ENCODE measurements at regions of chr20 and their contacts with region 1.

Region 1: DNA sequence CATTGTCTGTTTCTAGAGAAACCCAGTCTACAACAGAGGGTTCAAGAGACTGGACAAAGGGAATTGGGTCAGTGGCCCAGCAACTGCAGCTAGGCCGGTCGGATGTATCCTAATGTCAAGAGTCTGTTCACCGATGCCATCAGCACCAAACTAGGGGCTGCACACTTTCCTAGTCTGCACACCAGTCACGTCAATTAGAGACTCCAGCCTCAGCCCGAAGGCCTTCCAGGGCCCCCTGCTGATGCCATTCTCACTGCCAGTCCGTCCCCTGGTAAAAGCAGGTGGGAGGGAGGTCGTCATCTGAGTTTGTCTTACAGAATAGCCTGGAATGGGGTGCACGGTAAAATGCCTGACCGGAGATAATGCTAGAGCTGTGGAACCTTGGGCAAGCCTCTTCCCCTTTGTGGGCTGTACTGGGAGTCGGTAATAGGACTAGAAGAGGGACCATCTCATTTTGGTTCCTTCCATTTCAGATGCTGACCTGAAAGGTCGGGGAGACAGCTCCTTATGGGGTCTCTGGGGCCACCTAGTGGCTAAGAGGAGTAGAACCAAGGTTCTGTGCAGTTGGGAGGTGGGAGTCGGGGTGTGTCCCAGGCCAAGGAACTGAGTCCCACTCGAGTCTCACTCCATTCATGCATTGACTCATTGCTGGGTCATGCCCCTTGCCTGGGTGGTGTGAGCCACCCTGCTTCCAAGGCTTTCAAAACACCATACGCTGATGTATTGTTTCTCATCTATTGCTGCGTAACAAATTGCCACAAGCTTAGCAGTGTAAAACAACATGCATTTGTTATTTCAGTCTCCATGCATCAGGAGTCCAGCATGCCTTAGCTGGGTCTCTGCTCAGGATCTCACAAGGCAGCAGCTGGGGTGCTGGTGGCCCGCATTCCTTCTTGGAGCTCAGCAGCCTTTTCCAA is 5.1 kb downstream of the SOX12 start:
- DNase-seq: peak in 7 of 9 experiments; percentile 38 to 82 (median 72)
- ATAC-seq: peak; percentile 37
- H3K4me3 ChIP-seq: no peak overlapping the region
- H3K4me3 Mint-ChIP-seq: no peak overlapping the region
- H3K27ac ChIP-seq: no peak overlapping the region
- H3K27ac Mint-ChIP-seq: no peak overlapping the region
- H3K4me1 ChIP-seq: peaks cover 20% of the 10 kb centered on the region
- H3K4me1 Mint-ChIP-seq: peaks cover 32% of the 10 kb centered on the region
- H3K27me3 ChIP-seq: no peaks in the 10 kb centered on the region
- H3K27me3 Mint-ChIP-seq: no peaks in the 10 kb centered on the region
- CTCF ChIP-seq: peak; percentile 86

Region 2: DNA sequence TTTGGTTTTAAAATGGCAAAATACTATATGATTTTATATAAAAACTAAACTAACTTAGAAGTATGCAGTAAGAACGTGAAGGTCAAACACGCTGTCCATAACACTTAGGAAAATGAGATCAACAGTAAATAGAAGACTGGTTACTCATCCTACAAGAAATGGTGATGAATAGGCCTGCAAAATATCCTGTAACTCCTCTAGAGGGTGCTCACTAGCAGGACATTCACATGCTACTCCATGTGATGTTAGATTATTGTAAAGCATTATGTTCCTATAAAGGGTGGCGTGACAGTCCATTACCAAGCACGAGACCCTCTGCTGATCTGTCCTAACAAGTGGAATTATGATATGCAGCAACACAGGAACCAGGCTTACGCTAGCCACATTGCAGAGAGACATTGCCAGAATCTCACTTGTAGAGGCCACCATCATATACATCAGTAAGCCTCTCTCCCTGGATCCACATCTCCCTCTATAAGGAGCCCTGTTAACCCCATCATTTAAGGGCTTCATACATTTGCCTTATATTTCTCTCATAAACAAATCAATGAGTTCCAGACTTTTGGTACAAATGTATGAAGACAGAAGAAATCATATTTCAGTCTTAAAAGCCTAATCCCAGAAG is 121.4 kb before region 1 on chr20:
- CTCF ChIA-PET with region 1: interaction called, 29 read pairs
- POLR2A ChIA-PET with region 1: no interaction called
- intact Hi-C with region 1: loop called (anchors 1 kb)
- DNase-seq: peak in 3 of 9 experiments; percentile 7 to 68 (median 50)
- ATAC-seq: peak; percentile 80
- H3K4me3 ChIP-seq: no peak overlapping the region
- H3K4me3 Mint-ChIP-seq: no peak overlapping the region
- H3K27ac ChIP-seq: no peak overlapping the region
- H3K27ac Mint-ChIP-seq: no peak overlapping the region
- H3K4me1 ChIP-seq: no peaks in the 10 kb centered on the region
- H3K4me1 Mint-ChIP-seq: no peaks in the 10 kb centered on the region
- H3K27me3 ChIP-seq: no peaks in the 10 kb centered on the region
- H3K27me3 Mint-ChIP-seq: peaks cover 2% of the 10 kb centered on the region
- CTCF ChIP-seq: peak; percentile 55

Region 3: DNA sequence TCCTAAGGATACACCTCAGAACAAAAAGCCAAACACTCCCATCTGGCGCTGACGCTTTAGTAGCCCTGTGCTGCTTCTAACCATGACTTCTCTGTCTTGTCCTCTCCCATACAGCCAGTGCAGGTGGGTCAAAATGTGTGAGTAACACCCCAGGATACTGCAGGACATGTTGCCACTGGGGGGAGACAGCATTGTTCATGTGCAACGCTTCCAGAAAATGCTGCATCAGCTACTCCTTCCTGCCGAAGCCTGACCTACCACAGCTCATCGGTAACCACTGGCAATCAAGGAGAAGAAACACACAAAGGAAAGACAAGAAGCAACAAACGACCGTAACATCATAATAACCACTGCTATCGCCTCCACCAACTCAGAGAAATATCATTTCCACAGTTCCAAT is 71.5 kb before region 1 on chr20:
- CTCF ChIA-PET with region 1: interaction called, 11 read pairs
- POLR2A ChIA-PET with region 1: no interaction called
- intact Hi-C with region 1: loop called in 1 of 2 experiments (anchors 1 kb)
- DNase-seq: peak in 3 of 9 experiments; percentile 21 to 43 (median 32)
- ATAC-seq: no peak
- H3K4me3 ChIP-seq: no peak overlapping the region
- H3K4me3 Mint-ChIP-seq: no peak overlapping the region
- H3K27ac ChIP-seq: no peak overlapping the region
- H3K27ac Mint-ChIP-seq: no peak overlapping the region
- H3K4me1 ChIP-seq: no peaks in the 10 kb centered on the region
- H3K4me1 Mint-ChIP-seq: peaks cover 7% of the 10 kb centered on the region
- H3K27me3 ChIP-seq: no peaks in the 10 kb centered on the region
- H3K27me3 Mint-ChIP-seq: peaks cover 4% of the 10 kb centered on the region
- CTCF ChIP-seq: no peak

Region 4: DNA sequence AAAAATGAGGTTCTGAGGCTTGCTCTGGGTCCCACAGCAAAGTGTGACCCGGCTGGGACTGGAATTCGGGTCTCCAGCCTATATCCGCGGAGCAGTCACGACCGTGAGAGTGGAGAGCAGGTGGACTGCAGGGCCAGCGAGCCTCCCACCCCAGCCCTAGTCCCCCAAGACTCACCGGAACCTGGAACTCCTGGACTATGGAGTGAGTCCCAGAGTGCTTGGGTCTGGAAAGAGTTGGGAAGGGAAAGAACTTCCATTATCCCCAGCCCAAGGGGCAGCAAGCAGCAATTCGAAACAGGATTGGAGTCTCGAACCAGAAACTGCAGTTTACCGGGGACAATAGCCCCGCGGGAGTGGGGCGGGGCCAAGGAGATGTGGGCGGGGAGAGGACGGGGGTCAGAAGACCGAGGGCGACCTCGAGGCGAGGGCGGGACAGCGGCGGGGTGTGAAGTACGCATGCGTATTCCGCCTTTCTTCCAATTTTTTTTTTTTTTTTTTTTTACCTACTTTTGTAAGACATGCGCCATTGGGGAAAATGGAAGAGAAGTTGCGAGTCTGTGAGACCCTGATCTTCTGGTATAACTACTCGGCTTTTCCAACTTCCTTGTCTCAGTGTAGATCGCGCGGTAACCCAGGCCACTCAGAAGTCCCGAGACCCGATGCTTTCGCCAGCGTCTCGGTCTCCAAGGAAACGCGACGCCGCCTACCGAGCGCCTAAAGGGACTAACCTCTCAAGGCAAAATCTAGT is 40.2 kb before region 1 on chr20 and contains the start of gene C20orf96:
- CTCF ChIA-PET with region 1: interaction called, 19 read pairs
- POLR2A ChIA-PET with region 1: no interaction called
- intact Hi-C with region 1: loop called in 1 of 2 experiments (anchors 1 kb)
- DNase-seq: peak; percentile 62 to 92 (median 84)
- ATAC-seq: peak; percentile 88
- H3K4me3 ChIP-seq: peak within 1 kb of the TSS; percentile 54 to 73
- H3K4me3 Mint-ChIP-seq: no peak within 1 kb of the TSS
- H3K27ac ChIP-seq: peak within 1 kb of the TSS; percentile 17 to 28
- H3K27ac Mint-ChIP-seq: no peak within 1 kb of the TSS
- H3K4me1 ChIP-seq: peaks cover 22% of the 10 kb centered on the region
- H3K4me1 Mint-ChIP-seq: peaks cover 6% of the 10 kb centered on the region
- H3K27me3 ChIP-seq: no peaks in the 10 kb centered on the region
- H3K27me3 Mint-ChIP-seq: no peaks in the 10 kb centered on the region
- CTCF ChIP-seq: peak; percentile 34
- total RNA-seq, gene C20orf96: 1.9 to 2.6 TPM

Region 5: GRCh38 chr20:347640-348484 is 17.4 kb after region 1 on chr20:
- CTCF ChIA-PET with region 1: interaction called, 31 read pairs
- POLR2A ChIA-PET with region 1: interaction called, 3 read pairs
- intact Hi-C with region 1: loop called in 1 of 2 experiments (anchors 1 kb)
- DNase-seq: peak in 7 of 9 experiments; percentile 21 to 75 (median 56)
- ATAC-seq: peak; percentile 80
- H3K4me3 ChIP-seq: peak overlapping the region; percentile 76 to 89
- H3K4me3 Mint-ChIP-seq: peak overlapping the region; percentile 88
- H3K27ac ChIP-seq: peak overlapping the region; percentile 40 to 44
- H3K27ac Mint-ChIP-seq: peak overlapping the region; percentile 79
- H3K4me1 ChIP-seq: no peaks in the 10 kb centered on the region
- H3K4me1 Mint-ChIP-seq: peaks cover 13% of the 10 kb centered on the region
- H3K27me3 ChIP-seq: no peaks in the 10 kb centered on the region
- H3K27me3 Mint-ChIP-seq: no peaks in the 10 kb centered on the region
- CTCF ChIP-seq: no peak

Measured in CD8-positive, alpha-beta T cell (primary cell).